Activated CD4-positive, alpha-beta memory T cell treated with anti-CD3 and anti-CD28 coated beads for 36 hours (primary cell): ENCODE measurements at regions of chr6 and their contacts with region 1.

Region 1: DNA sequence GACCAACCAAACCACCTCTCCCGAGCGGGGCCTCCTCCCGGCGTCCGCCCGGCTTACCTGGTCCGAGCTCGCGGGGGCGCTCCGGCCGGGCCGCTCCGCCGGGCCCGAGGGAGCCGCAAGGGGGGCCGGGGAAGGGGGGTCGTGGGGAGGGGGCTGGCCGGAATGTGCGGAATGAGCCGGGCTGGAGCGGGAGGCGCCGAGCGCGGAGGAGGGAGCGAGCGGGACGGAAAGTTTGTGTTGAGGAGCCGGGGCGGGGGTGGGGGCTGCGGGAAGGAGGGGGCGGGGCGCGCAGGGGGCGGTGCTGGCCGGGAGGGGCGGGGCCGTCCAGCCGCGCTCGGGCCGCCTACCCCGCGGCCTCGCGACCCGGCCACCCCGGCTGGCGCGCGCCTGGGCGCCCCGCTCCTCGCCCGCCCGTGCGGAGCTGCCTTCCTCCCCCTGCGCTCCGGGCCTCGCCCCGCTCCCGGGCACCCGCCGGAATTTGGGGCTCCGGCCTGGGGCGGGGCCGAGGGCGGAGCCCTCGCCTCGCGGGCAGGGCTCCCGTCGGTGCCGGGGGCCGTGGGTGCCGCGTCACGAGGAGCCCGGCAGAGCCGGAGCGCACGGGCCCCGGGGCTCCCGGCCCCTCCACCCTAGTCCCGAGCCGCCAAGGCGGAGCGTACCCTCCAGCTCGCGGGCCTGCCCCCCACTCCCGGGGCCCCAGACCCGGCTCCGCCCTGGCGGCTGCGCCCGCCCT is at the start of gene TEAD3:
- DNase-seq: peak; percentile 55
- H3K4me3 Mint-ChIP-seq: peak within 1 kb of the TSS; percentile 71
- H3K27ac Mint-ChIP-seq: no peak within 1 kb of the TSS
- H3K4me1 Mint-ChIP-seq: peaks cover 14% of the 10 kb centered on the region
- H3K27me3 Mint-ChIP-seq: peaks cover 11% of the 10 kb centered on the region
- total RNA-seq, gene TEAD3: 1.8 to 2.2 TPM

Region 2: DNA sequence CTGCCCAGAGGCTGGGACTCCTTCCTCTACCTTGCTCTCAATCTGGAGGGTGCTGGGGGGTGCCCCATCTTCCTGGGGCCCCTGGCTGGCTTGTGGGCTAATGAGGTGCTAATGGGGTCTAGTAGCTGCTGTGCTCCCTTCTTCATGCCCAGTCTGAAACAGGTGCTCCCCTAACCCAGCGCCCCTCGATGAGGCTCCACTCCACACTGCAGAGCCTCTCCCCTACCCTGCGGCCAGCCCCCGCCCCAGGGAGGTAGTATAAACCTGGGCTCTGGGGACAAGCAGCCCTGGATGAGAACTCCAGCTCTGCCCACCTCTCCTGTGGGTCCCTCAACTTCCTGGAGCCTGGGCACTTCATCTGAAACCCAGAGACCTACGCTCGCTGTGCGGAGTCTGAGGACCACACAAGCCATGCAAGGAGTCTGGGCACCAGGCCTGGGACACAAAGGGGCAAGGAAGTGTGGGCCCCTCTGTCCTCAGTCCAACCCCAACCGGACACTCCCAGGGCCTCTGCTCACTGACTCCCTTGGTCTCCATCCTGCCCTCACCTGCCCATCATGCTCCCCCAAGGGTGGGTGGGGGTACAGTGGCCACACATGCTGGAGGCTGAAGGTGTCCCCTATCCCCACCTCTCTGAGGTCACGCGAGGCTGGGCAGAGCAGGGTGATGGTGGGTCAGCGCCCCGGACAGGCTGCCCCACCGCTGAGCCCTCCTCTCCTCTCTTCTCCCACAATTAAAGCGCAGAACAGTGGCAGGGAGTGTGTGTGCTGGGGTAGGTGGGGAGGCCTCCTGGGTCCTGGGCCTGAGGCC is 22.7 kb before region 1 on chr6:
- CTCF ChIA-PET with region 1: no interaction called
- POLR2A ChIA-PET with region 1: interaction called, 11 read pairs
- intact Hi-C with region 1: no loop called
- DNase-seq: no peak
- H3K4me3 Mint-ChIP-seq: no peak overlapping the region
- H3K27ac Mint-ChIP-seq: peak overlapping the region; percentile 23
- H3K4me1 Mint-ChIP-seq: peaks cover 29% of the 10 kb centered on the region
- H3K27me3 Mint-ChIP-seq: no peaks in the 10 kb centered on the region